Activated naive CD8-positive, alpha-beta T cell treated with anti-CD3 and anti-CD28 coated beads, Interleukin-2, amount 10 ng/mL, durations not matched to agents 7 days and 5 days (primary cell): ENCODE measurements at regions of chr1 and their contacts with region 1.

Region 1: GRCh38 chr1:77759071-77760028 is at the start of gene USP33:
- DNase-seq: peak; percentile 97
- ATAC-seq: peak; percentile 83
- H3K4me3 Mint-ChIP-seq: peak within 1 kb of the TSS; percentile 94
- H3K27ac Mint-ChIP-seq: peak within 1 kb of the TSS; percentile 94
- H3K4me1 Mint-ChIP-seq: peaks cover 25% of the 10 kb centered on the region
- H3K27me3 Mint-ChIP-seq: peaks cover 2% of the 10 kb centered on the region
- total RNA-seq, gene USP33: 69.7 to 70.8 TPM

Region 2: GRCh38 chr1:77642196-77642595 is 117.2 kb before region 1 on chr1:
- POLR2A ChIA-PET with region 1: no interaction called
- DNase-seq: no peak
- ATAC-seq: no peak
- H3K4me3 Mint-ChIP-seq: no peak overlapping the region
- H3K27ac Mint-ChIP-seq: no peak overlapping the region
- H3K4me1 Mint-ChIP-seq: peaks cover 3% of the 10 kb centered on the region
- H3K27me3 Mint-ChIP-seq: no peaks in the 10 kb centered on the region

Region 3: GRCh38 chr1:77655431-77655974 is 103.8 kb before region 1 on chr1:
- POLR2A ChIA-PET with region 1: no interaction called
- DNase-seq: no peak
- ATAC-seq: no peak
- H3K4me3 Mint-ChIP-seq: no peak overlapping the region
- H3K27ac Mint-ChIP-seq: no peak overlapping the region
- H3K4me1 Mint-ChIP-seq: peaks cover 1% of the 10 kb centered on the region
- H3K27me3 Mint-ChIP-seq: no peaks in the 10 kb centered on the region

Region 4: GRCh38 chr1:77779529-77780281 is 20.4 kb after region 1 on chr1 and contains the start of gene MIGA1:
- POLR2A ChIA-PET with region 1: interaction called, 15 read pairs
- DNase-seq: peak; percentile 75
- ATAC-seq: peak; percentile 98
- H3K4me3 Mint-ChIP-seq: peak within 1 kb of the TSS; percentile 98
- H3K27ac Mint-ChIP-seq: peak within 1 kb of the TSS; percentile 86
- H3K4me1 Mint-ChIP-seq: peaks cover 25% of the 10 kb centered on the region
- H3K27me3 Mint-ChIP-seq: peaks cover 3% of the 10 kb centered on the region
- total RNA-seq, gene MIGA1: 13.6 to 14.3 TPM